PC-3 (cell line): ENCODE measurements at regions of chr1 and their contacts with region 1.

Region 1: GRCh38 chr1:47725992-47726855 is 271.0 kb downstream of the TRABD2B start:
- DNase-seq: peak; percentile 87
- ATAC-seq: peak; percentile 95
- H3K4me3 ChIP-seq: peak overlapping the region; percentile 46
- H3K27ac ChIP-seq: no peak overlapping the region
- H3K4me1 ChIP-seq: no peaks in the 10 kb centered on the region
- H3K27me3 ChIP-seq: peaks cover 34% of the 10 kb centered on the region
- CTCF ChIP-seq: peak; percentile 93

Region 2: DNA sequence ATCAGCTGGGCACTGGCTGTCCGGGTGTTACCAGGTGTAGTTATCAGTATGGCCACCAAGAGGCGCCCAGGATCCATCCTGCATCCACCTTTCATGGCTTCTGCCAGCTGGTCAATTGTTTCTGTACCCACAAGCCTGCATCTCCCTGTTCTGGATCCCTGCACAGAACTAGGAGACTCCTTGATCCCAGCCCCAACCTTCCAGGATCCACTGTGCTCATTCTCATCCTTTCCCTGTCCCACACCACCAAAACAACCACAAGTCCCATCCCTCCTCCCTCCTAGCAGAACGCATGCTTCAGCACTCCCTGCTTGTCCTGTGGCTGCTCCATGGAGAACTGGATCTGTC is 337.4 kb before region 1 on chr1:
- CTCF ChIA-PET with region 1: interaction called, 9 read pairs
- POLR2A ChIA-PET with region 1: no interaction called
- intact Hi-C with region 1: loop called (anchors 1 kb)
- DNase-seq: peak; percentile 74
- ATAC-seq: peak; percentile 86
- H3K4me3 ChIP-seq: no peak overlapping the region
- H3K27ac ChIP-seq: no peak overlapping the region
- H3K4me1 ChIP-seq: peaks cover 6% of the 10 kb centered on the region; the same call in 1 of the 2 replicates
- H3K27me3 ChIP-seq: no peaks in the 10 kb centered on the region
- CTCF ChIP-seq: peak; percentile 82

Region 3: GRCh38 chr1:47432071-47433036 is 293.9 kb before region 1 on chr1:
- CTCF ChIA-PET with region 1: interaction called, 29 read pairs
- POLR2A ChIA-PET with region 1: interaction called, 3 read pairs
- intact Hi-C with region 1: loop called (anchors 1 kb)
- DNase-seq: peak; percentile 69
- ATAC-seq: peak; percentile 54
- H3K4me3 ChIP-seq: no peak overlapping the region
- H3K27ac ChIP-seq: no peak overlapping the region
- H3K4me1 ChIP-seq: peaks cover 12% of the 10 kb centered on the region; the same call in 1 of the 2 replicates
- H3K27me3 ChIP-seq: no peaks in the 10 kb centered on the region
- CTCF ChIP-seq: peak; percentile 81

Region 4: DNA sequence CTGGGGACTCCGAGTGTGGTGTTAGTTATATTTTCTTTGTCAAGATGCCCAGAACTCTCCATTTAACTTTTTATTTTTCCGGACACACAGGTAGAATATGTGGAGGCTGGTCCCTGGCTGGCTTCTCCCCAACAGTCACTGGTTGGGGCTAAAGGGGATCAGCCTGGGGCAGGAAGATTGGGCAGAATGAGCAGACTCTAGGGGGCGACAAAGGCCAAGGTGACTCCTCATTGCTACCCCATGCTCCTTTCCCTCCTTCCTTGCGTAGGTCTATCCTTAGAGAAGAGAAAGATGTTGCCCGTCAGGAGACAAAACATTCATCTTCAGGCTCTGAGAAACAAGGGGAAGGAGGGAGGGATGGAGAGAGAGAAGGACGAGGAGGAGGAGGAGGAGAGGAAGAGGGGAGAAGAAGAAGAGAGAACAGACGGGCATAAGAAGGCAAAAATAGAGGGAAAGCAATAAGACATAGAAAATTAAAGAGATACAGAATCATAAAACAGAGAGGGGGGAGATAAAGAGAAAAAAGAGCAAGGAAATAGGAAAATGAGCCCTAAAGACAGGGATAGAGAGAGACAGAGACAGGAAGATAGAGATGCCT is 198.5 kb before region 1 on chr1:
- CTCF ChIA-PET with region 1: interaction called, 4 read pairs
- POLR2A ChIA-PET with region 1: no interaction called
- intact Hi-C with region 1: loop called (anchors 2 kb)
- DNase-seq: peak; percentile 62
- ATAC-seq: peak; percentile 69
- H3K4me3 ChIP-seq: no peak overlapping the region
- H3K27ac ChIP-seq: no peak overlapping the region
- H3K4me1 ChIP-seq: no peaks in the 10 kb centered on the region
- H3K27me3 ChIP-seq: no peaks in the 10 kb centered on the region
- CTCF ChIP-seq: peak; percentile 85

Region 5: DNA sequence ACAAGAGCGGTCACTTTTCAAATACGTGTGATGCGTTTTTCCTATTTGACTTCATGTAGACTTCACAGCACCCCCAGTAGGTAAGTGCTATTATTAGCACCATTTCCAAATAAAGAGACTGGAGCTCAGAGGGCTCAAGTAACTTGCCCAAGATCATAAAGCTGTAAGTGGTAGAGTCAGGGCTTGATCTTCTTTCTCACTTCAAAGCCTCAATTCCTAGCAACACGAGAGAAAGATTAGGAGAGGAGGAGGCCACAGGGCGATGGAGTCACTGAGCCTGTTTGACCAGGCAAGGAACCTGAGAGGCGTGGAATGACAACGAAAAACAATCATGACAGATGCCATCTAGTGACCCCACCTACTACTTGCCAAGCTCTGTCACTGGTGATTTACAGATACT is 107.4 kb before region 1 on chr1:
- CTCF ChIA-PET with region 1: no interaction called
- POLR2A ChIA-PET with region 1: no interaction called
- intact Hi-C with region 1: no loop called
- DNase-seq: peak; percentile 21
- ATAC-seq: no peak
- H3K4me3 ChIP-seq: no peak overlapping the region
- H3K27ac ChIP-seq: no peak overlapping the region
- H3K4me1 ChIP-seq: no peaks in the 10 kb centered on the region
- H3K27me3 ChIP-seq: peaks cover 25% of the 10 kb centered on the region
- CTCF ChIP-seq: no peak

Region 6: GRCh38 chr1:47837866-47838561 is 111.8 kb after region 1 on chr1:
- CTCF ChIA-PET with region 1: no interaction called
- POLR2A ChIA-PET with region 1: no interaction called
- intact Hi-C with region 1: no loop called
- DNase-seq: no peak
- ATAC-seq: no peak
- H3K4me3 ChIP-seq: no peak overlapping the region
- H3K27ac ChIP-seq: no peak overlapping the region
- H3K4me1 ChIP-seq: no peaks in the 10 kb centered on the region
- H3K27me3 ChIP-seq: no peaks in the 10 kb centered on the region
- CTCF ChIP-seq: no peak

Region 7: DNA sequence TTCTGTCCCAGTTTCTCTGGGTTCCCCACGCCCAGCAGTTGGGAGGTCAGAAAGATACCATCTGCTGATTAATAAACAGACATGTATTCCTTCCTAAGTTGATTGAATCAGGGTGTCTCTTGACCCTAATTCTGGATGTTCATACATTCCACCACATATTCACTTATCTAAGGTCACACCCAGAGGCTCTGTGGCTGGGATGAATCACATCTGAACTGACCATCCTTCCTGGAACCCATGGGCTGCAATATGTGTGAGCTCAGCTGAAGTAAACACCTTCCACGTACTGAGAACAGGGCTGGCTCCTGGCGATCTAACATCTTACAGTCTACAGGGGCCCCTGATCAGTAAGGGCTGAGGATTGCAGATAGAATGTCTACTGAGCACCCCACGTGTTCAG is 291.5 kb after region 1 on chr1:
- CTCF ChIA-PET with region 1: no interaction called
- POLR2A ChIA-PET with region 1: no interaction called
- intact Hi-C with region 1: no loop called
- DNase-seq: peak; percentile 11
- ATAC-seq: peak; percentile 43; the same call in 1 of the 2 replicates
- H3K4me3 ChIP-seq: no peak overlapping the region
- H3K27ac ChIP-seq: no peak overlapping the region
- H3K4me1 ChIP-seq: no peaks in the 10 kb centered on the region
- H3K27me3 ChIP-seq: peaks cover 31% of the 10 kb centered on the region
- CTCF ChIP-seq: no peak